Head of caudate nucleus (tissue), 42 donors: ENCODE measurements at regions of chr10 and their contacts with region 1.

Region 1: GRCh38 chr10:96831867-96832720 is at the start of gene LCOR:
- DNase-seq: peak; percentile 42 to 92 (median 82)

Region 2: DNA sequence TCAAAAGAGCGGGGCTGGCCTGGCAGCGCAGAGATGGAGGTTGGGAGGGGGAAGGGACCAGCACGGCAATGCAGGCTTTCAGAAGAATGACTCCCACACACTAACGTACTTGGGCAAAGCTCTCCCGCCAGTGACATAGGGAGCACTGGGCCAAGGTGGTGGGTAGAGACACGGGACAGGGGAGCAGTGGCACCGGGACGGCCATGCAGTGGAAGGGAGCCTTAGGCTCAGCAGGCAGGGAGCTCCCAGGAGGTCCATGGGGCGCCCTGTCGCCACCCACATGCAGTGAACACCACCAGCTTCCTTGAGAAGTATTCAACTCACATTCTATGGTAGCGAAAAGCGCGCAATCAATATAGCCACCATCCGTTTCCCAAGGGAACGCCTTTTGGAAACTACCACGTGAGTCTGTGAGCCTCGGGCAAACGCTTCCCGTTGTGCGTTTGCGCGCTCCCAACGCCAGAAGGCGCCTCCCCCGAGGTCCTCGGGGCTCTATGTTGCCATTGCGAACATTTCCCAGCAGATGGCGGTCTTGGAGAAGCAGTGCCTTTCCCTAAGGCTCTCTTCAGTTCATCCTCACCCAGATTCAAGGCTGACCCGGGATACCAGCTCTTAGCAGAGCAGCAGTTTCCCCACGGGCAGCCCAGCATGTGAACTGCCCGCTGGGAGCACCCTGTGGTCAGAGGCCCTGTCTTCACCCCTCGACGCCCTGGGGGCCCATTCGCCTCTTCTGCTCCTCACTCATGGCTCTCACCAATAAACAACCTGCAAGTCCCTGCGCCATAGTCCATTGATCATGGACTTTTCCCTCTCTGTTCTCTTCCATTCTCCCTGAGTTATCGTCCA is 456.9 kb before region 1 on chr10:
- intact Hi-C with region 1: loop called (anchors 10 kb)
- DNase-seq: peak; percentile 81 to 97 (median 93)

Region 3: GRCh38 chr10:96586419-96587263 is 245.5 kb before region 1 on chr10 and contains the start of gene TM9SF3:
- intact Hi-C with region 1: loop called (anchors 5 kb)
- DNase-seq: peak; percentile 72 to 97 (median 92)

Region 4: GRCh38 chr10:96873756-96874467 is 41.8 kb after region 1 on chr10:
- intact Hi-C with region 1: loop called (anchors 5 kb)
- DNase-seq: peak in 20 of 42 donors; percentile 11 to 72 (median 28)

Region 5: DNA sequence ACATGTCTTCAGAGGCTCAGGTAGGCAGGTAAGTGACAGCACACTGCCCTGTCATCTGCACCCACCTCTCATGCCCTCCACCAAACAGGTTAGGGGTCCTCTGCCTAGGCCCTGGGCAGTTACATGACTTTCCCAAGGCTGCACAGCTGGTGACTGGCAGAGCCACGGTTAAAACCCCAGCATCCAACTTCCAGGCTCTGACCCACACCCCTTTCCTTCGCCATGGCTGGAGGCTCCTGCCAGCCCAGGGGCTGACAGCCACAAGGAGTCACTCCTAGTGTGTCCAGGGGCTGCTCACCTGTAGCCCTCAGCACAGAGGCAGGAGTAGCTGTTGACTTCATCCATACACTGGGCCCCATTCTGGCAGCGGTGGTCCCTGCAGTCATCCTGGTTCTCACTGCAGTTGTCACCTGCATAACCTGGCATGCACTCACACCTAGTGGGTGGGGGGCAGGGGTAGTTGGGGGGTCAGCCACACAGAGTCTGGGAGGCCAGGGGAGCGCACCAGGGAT is 178.7 kb after region 1 on chr10:
- intact Hi-C with region 1: no loop called
- DNase-seq: peak in 1 of 42 donors; percentile 9

Region 6: GRCh38 chr10:97025613-97026242 is 193.6 kb after region 1 on chr10:
- intact Hi-C with region 1: loop called (anchors 5 kb)
- DNase-seq: peak in 40 of 42 donors; percentile 48 to 91 (median 73)